HepG2 (cell line): ENCODE measurements at regions of chr17 and their contacts with region 1.

Region 1: DNA sequence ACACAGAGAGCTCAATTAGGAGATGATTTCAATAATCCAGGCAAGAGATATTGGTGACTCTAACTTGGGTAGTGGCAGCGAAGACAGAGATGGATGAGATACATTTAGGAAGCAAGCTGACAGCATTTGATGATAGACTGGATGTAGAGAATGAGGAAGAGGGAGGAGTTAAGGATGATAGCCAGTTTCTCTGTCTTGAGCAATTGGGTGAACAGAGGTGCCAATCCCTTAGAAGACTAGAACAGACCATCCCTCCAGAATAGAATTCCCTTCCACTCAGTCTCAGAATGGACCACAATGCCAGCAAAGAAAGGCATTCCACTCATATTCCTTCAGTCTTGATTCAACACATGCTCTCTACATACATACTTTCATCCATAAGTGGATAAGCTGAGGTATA is 17.2 kb downstream of the POLG2 start:
- DNase-seq: no peak
- ATAC-seq: no peak
- H3K4me3 ChIP-seq: no peak overlapping the region
- H3K27ac ChIP-seq: no peak overlapping the region
- H3K4me1 ChIP-seq: no peaks in the 10 kb centered on the region
- H3K27me3 ChIP-seq: no peaks in the 10 kb centered on the region
- CTCF ChIP-seq: no peak
- EP300 ChIP-seq: no peak
- POLR2A ChIP-seq: no peak
- RAD21 ChIP-seq: no peak

Region 2: GRCh38 chr17:64385187-64386083 is 94.2 kb before region 1 on chr17:
- CTCF ChIA-PET with region 1: no interaction called
- POLR2A ChIA-PET with region 1: no interaction called
- in situ Hi-C with region 1: no loop called
- intact Hi-C with region 1: no loop called
- DNase-seq: peak; percentile 96
- ATAC-seq: peak; percentile 81
- H3K4me3 ChIP-seq: peak overlapping the region; percentile 53 to 79 (median 78)
- H3K27ac ChIP-seq: peak overlapping the region; percentile 89
- H3K4me1 ChIP-seq: peaks cover 94% of the 10 kb centered on the region
- H3K27me3 ChIP-seq: no peaks in the 10 kb centered on the region; a peak in 1 of 5 replicates
- CTCF ChIP-seq: peak; percentile 28
- EP300 ChIP-seq: peak; percentile 72 to 95; a peak in 3 of 4 replicates
- POLR2A ChIP-seq: peak; percentile 71 to 72
- RAD21 ChIP-seq: no peak; the same call in 1 of the 2 replicates

Region 3: GRCh38 chr17:64515419-64515818 is 35.8 kb after region 1 on chr17:
- CTCF ChIA-PET with region 1: no interaction called
- POLR2A ChIA-PET with region 1: no interaction called
- in situ Hi-C with region 1: no loop called
- intact Hi-C with region 1: loop called (anchors 2 kb)
- DNase-seq: no peak
- ATAC-seq: no peak
- H3K4me3 ChIP-seq: no peak overlapping the region
- H3K27ac ChIP-seq: no peak overlapping the region
- H3K4me1 ChIP-seq: no peaks in the 10 kb centered on the region
- H3K27me3 ChIP-seq: no peaks in the 10 kb centered on the region
- CTCF ChIP-seq: no peak
- EP300 ChIP-seq: no peak
- POLR2A ChIP-seq: no peak
- RAD21 ChIP-seq: no peak